ENCODE measurements at regions of chr2 and their contacts with region 1.

Region 1: GRCh38 chr2:156341452-156342253 is 9.1 kb upstream of the NR4A2 start:
- DNase-seq: peak; percentile 66 to 82
- H3K4me3 ChIP-seq: peak overlapping the region; percentile 74
- H3K27ac ChIP-seq: peak overlapping the region; percentile 78
- H3K4me1 ChIP-seq: peaks cover 14% of the 10 kb centered on the region
- H3K27me3 ChIP-seq: no peaks in the 10 kb centered on the region
- CTCF ChIP-seq: no peak

Region 2: DNA sequence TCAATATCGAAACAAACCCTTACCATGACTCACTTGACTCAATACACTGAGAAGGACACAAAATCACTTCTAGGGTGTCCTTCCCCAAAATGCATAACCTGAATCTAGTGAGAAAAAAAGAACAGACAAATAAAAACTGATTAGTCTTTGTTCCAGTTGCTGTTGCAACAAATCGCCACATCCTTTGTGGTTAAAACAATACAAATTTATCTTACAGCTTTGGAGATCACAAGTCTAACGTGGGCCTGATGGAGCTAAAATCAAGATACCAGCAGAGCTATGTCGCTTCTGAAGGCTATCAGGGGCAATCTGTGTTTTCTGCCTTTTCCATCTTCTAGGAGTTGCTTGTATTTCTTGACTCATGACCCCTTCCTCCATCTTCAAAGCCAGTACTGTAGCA is 1101.5 kb before region 1 on chr2:
- CTCF ChIA-PET with region 1: no interaction called
- POLR2A ChIA-PET with region 1: no interaction called
- intact Hi-C with region 1: loop called (anchors 10 kb)
- DNase-seq: no peak
- H3K4me3 ChIP-seq: no peak overlapping the region
- H3K27ac ChIP-seq: no peak overlapping the region
- H3K4me1 ChIP-seq: no peaks in the 10 kb centered on the region
- H3K27me3 ChIP-seq: no peaks in the 10 kb centered on the region
- CTCF ChIP-seq: no peak

Region 3: DNA sequence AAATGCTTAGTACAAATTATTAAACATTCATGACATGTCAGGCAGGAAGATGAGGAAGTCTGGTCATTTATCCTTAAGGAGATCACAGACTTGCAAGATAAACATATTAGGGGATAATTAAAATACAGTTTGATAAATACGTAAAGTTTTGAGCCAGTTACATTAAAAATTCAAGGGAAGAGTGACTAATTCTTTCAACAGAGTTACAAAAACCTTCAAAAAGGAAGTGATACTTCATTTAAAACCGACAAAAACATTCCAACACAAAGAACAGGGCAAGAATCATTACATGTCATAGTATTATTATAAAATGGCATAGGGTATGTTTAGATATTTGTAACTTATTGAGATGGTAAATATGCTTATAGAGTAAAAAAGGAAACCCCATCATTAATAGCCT is 645.1 kb before region 1 on chr2:
- CTCF ChIA-PET with region 1: no interaction called
- POLR2A ChIA-PET with region 1: no interaction called
- intact Hi-C with region 1: no loop called
- DNase-seq: no peak
- H3K4me3 ChIP-seq: no peak overlapping the region
- H3K27ac ChIP-seq: no peak overlapping the region
- H3K4me1 ChIP-seq: no peaks in the 10 kb centered on the region
- H3K27me3 ChIP-seq: no peaks in the 10 kb centered on the region
- CTCF ChIP-seq: no peak

Region 4: GRCh38 chr2:156309167-156309566 is 32.5 kb before region 1 on chr2:
- CTCF ChIA-PET with region 1: no interaction called
- POLR2A ChIA-PET with region 1: no interaction called
- intact Hi-C with region 1: no loop called
- DNase-seq: no peak
- H3K4me3 ChIP-seq: no peak overlapping the region
- H3K27ac ChIP-seq: no peak overlapping the region
- H3K4me1 ChIP-seq: no peaks in the 10 kb centered on the region
- H3K27me3 ChIP-seq: no peaks in the 10 kb centered on the region
- CTCF ChIP-seq: no peak

Region 5: DNA sequence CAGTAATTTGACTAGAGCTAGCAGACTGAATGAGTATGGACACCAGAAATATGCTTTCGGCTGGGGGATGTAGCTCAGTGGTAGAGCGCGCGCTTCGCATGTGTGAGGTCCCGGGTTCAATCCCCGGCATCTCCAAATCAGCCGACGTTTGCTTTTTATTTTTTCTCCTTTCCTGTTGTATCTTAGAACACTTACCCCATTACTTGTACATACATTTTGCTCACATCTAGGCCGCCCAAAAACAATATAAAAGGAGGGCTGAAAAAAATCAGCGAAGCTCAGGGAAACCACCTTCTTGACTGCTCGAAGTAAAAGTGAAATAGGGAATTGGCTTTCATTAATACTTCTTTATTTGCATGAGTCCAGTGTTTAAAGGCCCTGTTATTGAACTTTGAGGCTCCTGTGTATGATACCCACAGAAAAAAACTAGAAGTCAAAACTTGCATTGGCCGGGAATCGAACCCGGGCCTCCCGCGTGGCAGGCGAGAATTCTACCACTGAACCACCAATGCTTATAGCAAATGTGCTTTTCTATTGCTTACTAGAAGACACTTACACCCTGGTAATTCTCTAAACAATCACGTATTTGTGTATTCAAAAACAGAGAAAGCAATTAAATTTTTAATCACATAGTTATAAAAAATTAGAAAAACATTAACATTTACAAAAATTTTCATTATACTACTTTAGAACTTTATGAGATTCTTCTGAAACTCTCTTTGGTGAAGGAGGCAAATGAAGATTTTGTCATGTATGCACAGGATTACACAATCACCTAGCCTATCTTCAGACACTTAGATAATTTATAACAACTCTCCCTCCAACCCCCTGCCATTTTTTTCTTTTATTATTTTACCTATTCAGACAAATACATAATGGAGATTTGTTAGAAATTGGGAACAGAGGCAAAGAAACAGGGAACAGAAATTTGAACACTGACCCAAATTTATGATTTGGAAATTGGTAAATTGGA is 59.3 kb after region 1 on chr2:
- CTCF ChIA-PET with region 1: interaction called, 4 read pairs
- POLR2A ChIA-PET with region 1: no interaction called
- intact Hi-C with region 1: loop called (anchors 1 kb)
- DNase-seq: peak; percentile 60 to 63
- H3K4me3 ChIP-seq: peak overlapping the region; percentile 84
- H3K27ac ChIP-seq: peak overlapping the region; percentile 83
- H3K4me1 ChIP-seq: peaks cover 26% of the 10 kb centered on the region
- H3K27me3 ChIP-seq: no peaks in the 10 kb centered on the region
- CTCF ChIP-seq: no peak

Region 6: DNA sequence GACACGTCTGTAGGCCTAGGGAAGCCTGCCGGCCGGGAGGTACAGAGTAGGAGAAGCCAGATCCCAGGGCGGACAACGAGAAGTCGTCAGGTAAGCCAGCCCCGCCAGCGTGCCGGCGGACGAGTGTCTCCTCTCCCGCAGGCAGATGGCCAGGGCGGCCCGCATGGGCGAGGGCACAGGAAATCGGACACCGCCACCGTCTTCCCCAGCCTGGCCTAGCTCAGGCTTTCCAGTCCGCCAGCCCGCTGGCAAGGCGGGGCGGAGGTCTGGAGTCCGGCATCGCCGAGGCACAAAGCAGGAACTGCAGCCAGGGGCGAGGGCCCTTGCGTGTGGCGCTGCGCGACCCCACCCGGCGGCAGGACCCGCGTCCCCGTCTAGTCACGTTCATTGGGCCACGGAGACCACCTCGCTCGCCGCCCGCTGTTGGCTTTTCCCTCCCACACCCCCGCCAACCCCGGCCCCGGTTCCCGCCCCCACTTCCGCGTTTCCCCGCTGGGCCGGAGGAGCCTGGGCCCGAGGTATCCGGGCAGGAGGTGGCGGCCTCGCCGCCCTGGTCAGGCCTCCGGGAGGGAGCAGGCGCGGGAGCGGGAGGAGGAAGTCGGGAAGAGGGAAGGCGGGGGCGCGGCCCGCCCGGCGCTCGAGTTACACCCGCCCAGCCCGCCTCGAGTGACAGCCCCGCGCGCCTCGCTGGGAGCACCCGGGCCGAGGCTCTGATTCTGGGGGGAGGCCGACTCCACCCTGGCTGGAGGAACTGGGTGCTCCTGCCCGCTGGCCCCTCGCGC is 94.3 kb after region 1 on chr2 and contains the start of gene GPD2:
- CTCF ChIA-PET with region 1: no interaction called
- POLR2A ChIA-PET with region 1: no interaction called
- intact Hi-C with region 1: loop called (anchors 2 kb)
- DNase-seq: peak; percentile 74 to 88
- H3K4me3 ChIP-seq: peak within 1 kb of the TSS; percentile 65
- H3K27ac ChIP-seq: peak within 1 kb of the TSS; percentile 95
- H3K4me1 ChIP-seq: peaks cover 55% of the 10 kb centered on the region
- H3K27me3 ChIP-seq: no peaks in the 10 kb centered on the region
- CTCF ChIP-seq: no peak
- total RNA-seq, gene GPD2: 47.1 and 67.8 TPM in 2 replicates

Region 7: DNA sequence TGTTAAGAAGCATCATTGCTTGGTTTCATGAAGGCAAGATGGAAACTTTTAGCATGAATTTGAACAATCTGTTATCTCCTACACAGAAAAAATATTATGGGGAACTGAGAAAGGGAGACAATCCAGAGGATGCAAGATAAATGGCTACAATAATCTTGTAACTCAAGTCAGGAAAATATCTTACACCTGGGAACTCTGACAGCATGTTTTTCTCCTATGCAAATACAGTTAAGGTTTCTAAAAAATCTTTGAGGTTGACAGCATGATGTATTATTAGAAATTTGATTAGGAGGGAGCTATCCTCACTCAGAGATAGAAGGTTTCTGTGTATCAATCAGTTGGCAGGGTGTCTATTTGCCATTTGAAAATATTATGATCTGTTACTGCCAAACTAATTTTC is 170.2 kb after region 1 on chr2:
- CTCF ChIA-PET with region 1: no interaction called
- POLR2A ChIA-PET with region 1: no interaction called
- intact Hi-C with region 1: no loop called
- DNase-seq: no peak
- H3K4me3 ChIP-seq: no peak overlapping the region
- H3K27ac ChIP-seq: no peak overlapping the region
- H3K4me1 ChIP-seq: no peaks in the 10 kb centered on the region
- H3K27me3 ChIP-seq: no peaks in the 10 kb centered on the region
- CTCF ChIP-seq: no peak

Region 8: DNA sequence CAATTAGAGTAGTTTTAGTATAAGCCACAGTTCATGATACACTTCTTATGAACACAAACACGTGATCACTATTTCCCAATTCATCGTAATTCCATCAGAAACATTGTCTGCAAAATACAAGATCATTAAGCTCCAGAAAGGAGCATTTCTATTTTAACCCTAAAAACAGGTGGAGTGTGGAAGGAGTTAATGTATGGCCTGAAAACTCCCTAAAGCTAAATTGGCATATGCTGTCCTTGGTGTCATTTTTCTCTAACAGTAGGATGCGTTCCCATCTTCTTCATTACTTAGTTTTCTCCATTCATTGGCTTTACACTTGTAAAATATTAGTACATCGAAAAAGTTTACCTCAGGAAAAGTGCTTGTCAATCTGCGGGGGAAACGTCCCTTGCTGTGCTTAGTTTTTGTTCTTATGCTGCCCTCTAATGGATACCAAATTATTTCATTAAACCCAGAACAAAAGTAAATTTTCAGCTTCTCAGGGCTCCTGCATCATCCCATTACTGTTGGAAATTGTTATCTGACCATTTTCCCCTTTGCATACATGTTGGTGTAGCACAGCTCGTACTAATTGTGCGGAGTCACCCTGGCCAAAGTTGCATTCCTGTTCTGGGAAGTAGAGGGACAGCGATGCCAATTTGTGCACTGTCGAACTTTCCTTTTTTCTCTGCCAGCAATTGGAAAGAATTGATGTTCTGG is 247.9 kb after region 1 on chr2:
- CTCF ChIA-PET with region 1: interaction called, 3 read pairs
- POLR2A ChIA-PET with region 1: no interaction called
- intact Hi-C with region 1: loop called (anchors 2 kb)
- DNase-seq: no peak
- H3K4me3 ChIP-seq: no peak overlapping the region
- H3K27ac ChIP-seq: no peak overlapping the region
- H3K4me1 ChIP-seq: no peaks in the 10 kb centered on the region
- H3K27me3 ChIP-seq: no peaks in the 10 kb centered on the region
- CTCF ChIP-seq: peak; percentile 65